Activated CD4-positive, alpha-beta memory T cell treated with anti-CD3 and anti-CD28 coated beads for 36 hours (primary cell): ENCODE measurements at regions of chrX and their contacts with region 1.

Region 1: GRCh38 chrX:66408507-66408906 is 230.4 kb downstream of the EDA2R start:
- DNase-seq: no peak
- H3K4me3 Mint-ChIP-seq: no peak overlapping the region
- H3K27ac Mint-ChIP-seq: no peak overlapping the region
- H3K4me1 Mint-ChIP-seq: no peaks in the 10 kb centered on the region
- H3K27me3 Mint-ChIP-seq: no peaks in the 10 kb centered on the region

Region 2: GRCh38 chrX:65997978-65998717 is 410.4 kb before region 1 on chrX:
- CTCF ChIA-PET with region 1: no interaction called
- POLR2A ChIA-PET with region 1: no interaction called
- intact Hi-C with region 1: no loop called
- DNase-seq: no peak
- H3K4me3 Mint-ChIP-seq: no peak overlapping the region
- H3K27ac Mint-ChIP-seq: no peak overlapping the region
- H3K4me1 Mint-ChIP-seq: peaks cover 52% of the 10 kb centered on the region
- H3K27me3 Mint-ChIP-seq: no peaks in the 10 kb centered on the region

Region 3: DNA sequence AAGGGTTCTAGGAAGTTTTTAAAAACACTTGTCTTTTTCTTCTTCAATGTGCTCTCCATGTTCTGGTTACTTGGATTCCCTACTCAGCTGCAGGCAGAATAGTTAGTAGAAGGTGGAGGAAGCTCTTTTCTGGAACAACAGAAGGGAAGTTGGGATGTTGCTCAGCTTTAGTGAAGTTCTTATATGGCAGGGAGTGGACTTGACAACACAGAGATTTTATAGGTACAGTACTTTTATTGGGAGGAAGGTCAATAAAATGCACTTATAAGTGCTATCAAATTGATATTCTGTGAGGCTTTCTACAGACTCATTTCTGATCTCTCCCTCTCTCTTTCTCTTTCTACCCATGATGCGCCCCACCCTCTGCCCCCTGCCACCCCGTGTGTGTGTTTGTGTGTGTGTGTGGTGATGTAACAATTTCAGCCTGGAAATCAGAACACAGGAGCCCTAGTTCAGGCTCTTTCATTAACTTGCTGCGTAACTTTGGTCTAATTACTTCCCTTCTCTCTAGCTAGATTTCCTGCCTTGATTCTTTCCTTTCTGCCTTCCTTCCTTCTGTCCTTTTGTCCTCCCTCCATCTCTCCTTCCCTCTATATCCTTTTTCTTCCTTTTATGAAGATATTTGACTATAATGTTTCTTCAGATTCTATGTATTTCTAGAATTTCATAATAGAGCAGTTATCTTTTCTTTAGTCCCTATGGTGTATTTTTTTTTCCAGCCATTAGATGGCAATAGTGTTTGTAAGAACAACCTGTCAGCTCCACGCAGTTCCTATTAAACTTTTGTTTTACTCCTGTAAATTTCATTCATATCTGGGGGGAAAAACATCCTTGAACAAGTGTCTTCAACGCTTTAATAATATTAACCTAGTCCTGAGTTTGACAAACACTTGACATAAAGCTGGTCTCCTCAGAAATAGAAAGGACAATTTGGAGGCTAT is 207.4 kb before region 1 on chrX:
- CTCF ChIA-PET with region 1: no interaction called
- POLR2A ChIA-PET with region 1: no interaction called
- intact Hi-C with region 1: loop called (anchors 1 kb)
- DNase-seq: no peak
- H3K4me3 Mint-ChIP-seq: no peak overlapping the region
- H3K27ac Mint-ChIP-seq: no peak overlapping the region
- H3K4me1 Mint-ChIP-seq: peaks cover 17% of the 10 kb centered on the region
- H3K27me3 Mint-ChIP-seq: no peaks in the 10 kb centered on the region